ENCODE measurements at regions of chr11 and their contacts with region 1.

Region 1: DNA sequence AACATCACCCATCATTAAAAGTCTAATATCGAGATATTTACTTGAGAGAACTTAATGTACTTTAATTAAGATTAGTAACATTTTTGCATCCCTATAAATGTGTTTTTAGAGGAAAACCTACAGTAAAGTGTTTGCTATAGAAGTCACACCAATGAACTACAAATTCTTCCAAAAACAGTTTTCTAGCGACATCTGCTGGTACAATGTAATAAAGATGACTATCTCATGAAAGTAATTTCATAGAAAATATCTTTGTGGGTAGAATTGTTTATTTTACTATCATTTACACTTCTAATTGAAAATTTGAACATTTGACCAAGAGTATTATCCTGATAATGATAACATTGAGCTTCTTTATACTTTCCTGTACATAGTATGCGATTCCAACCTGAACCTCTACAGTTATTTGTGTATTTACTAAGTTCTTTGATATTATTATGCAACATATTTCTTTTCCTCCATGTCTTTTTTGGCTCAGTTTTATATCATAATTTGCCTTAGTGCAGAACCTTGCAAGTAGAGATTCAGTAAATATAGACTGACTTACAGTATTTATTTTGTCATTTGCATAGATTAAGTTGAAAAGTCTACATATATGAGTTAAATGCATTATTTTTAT is 252.7 kb downstream of the TMEM135 start:
- DNase-seq: peak; percentile 33
- ATAC-seq: peak; percentile 63; the same call in 1 of the 2 replicates
- H3K4me3 ChIP-seq: no peak overlapping the region
- H3K27ac ChIP-seq: no peak overlapping the region
- H3K4me1 ChIP-seq: no peaks in the 10 kb centered on the region
- H3K27me3 ChIP-seq: no peaks in the 10 kb centered on the region
- CTCF ChIP-seq: peak; percentile 60; the same call in 1 of the 2 replicates

Region 2: DNA sequence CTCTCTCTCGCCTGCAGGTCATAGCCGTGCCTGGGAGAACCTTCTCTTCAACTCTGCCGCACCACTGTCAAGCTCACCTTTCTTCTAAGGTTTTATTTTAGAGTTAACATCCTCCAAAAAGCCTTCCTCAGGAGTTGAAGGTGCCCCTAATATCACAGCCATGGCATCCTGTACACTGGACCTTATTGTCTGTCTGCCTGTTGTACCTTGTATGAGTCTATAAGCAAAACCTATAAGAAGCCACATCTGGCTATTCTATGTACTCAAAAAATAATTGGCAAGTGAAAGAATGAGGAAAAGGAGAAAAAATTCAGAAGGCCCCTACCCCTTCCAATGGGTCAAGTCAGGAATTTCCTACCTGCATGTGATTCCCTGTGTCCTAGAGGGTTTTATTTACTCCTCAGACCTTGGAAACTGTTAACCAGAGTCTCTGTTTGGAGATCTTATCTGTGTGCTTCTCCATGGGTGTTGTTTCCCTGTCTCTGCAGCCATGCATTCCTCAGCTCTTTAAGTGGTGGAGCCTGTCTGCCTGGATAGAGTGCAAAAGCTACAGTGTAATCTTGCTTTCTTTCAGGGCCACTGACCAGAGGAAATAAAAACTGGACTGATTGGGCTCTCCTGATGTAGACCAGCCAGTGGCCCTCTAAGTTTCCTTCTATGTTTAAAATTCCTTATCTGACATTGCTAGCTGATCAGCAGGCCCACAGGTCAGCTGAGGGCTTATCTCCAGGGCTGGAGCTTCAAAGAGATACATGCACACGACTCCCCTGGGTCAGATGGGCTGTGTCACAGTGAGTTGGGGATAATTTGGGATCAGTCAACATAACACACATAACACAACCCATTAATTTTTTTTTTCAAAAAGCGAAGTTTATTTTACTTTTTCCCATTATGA is 290.3 kb before region 1 on chr11:
- CTCF ChIA-PET with region 1: interaction called, 3 read pairs
- POLR2A ChIA-PET with region 1: no interaction called
- in situ Hi-C with region 1: no loop called
- intact Hi-C with region 1: loop called (anchors 5 kb)
- DNase-seq: no peak
- ATAC-seq: peak; percentile 93
- H3K4me3 ChIP-seq: no peak overlapping the region
- H3K27ac ChIP-seq: peak overlapping the region; percentile 87
- H3K4me1 ChIP-seq: peaks cover 25% of the 10 kb centered on the region
- H3K27me3 ChIP-seq: no peaks in the 10 kb centered on the region
- CTCF ChIP-seq: no peak

Region 3: GRCh38 chr11:87263264-87263838 is 27.1 kb before region 1 on chr11:
- CTCF ChIA-PET with region 1: no interaction called
- POLR2A ChIA-PET with region 1: interaction called, 14 read pairs
- in situ Hi-C with region 1: no loop called
- intact Hi-C with region 1: no loop called
- DNase-seq: no peak
- ATAC-seq: no peak
- H3K4me3 ChIP-seq: no peak overlapping the region
- H3K27ac ChIP-seq: no peak overlapping the region
- H3K4me1 ChIP-seq: peaks cover 4% of the 10 kb centered on the region; the same call in 1 of the 2 replicates
- H3K27me3 ChIP-seq: no peaks in the 10 kb centered on the region
- CTCF ChIP-seq: no peak

Measured in Panc1 (cell line).